Left ventricle myocardium superior (tissue), 1 donor: ENCODE measurements at regions of chr2 and their contacts with region 1.

Region 1: DNA sequence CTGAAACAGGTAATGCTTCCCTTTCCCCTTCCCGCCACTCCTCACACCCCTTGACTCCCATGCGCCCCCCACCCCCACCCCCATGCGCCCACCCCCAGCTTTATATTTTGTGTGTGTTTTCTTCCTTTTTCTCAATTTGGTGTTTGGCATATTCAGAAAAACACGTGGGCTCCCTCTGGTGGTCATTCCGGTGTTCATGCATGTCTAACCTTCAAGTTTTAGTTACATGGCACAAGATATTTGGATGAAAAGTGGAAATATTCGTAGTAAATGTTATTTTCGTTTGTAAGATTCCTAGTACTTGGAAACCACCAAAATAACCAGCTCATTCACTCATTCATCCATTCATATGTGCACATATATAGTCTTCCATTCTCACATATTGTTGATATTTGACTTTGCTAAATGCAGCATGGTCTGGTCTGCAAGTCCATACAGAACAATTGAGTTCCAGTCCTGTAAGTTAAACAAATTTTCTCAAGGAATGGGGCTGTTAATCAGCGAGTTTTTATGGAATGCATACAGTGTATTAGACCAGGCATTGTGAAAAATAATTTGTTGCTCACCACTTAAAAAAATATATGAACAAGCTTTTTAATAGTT is 143.6 kb upstream of the MAP3K20 start:
- DNase-seq: peak; percentile 65
- ATAC-seq: peak; percentile 17

Region 2: DNA sequence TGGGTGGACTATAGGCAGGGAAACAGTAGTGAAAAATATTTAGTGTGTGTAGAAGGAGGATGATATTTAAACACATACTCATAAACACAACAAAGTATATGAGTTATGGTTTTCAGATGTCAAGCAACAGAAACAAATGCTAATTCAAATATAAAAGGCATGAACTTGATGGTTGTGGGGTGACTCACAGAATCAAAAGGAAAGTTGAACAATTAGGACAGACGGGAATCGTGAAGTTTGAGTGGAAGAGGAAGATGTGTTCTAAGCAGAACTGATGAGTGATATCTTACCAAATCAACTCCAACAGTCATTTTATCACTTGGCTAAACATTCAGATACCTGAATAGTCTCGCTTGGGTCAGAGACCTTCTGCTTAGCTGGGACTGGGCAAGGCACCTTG is 558.3 kb before region 1 on chr2:
- intact Hi-C with region 1: no loop called
- DNase-seq: no peak
- ATAC-seq: no peak

Region 3: DNA sequence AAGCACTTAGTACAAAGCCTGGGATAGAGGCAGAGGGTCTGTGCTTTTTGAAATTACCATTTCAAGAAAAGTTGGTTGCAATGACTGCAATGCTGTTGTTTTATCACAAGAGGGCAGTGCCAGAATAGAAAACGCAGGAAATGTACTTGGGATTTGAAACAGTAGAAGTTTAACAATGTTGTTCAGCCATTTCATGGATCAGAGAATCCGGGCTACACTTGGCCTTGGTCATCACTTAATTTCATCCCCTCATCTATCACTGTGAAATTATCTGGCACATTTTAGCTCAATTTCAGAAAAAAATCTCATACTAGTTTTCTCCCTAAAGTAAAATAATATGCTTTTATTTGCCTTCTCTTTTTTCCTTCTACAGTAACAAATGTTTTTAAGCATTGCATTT is 125.5 kb before region 1 on chr2:
- intact Hi-C with region 1: loop called (anchors 5 kb)
- DNase-seq: no peak
- ATAC-seq: peak; percentile 35

Region 4: GRCh38 chr2:172861656-172862476 is 70.2 kb before region 1 on chr2:
- intact Hi-C with region 1: loop called (anchors 2 kb)
- DNase-seq: no peak
- ATAC-seq: peak; percentile 56

Region 5: DNA sequence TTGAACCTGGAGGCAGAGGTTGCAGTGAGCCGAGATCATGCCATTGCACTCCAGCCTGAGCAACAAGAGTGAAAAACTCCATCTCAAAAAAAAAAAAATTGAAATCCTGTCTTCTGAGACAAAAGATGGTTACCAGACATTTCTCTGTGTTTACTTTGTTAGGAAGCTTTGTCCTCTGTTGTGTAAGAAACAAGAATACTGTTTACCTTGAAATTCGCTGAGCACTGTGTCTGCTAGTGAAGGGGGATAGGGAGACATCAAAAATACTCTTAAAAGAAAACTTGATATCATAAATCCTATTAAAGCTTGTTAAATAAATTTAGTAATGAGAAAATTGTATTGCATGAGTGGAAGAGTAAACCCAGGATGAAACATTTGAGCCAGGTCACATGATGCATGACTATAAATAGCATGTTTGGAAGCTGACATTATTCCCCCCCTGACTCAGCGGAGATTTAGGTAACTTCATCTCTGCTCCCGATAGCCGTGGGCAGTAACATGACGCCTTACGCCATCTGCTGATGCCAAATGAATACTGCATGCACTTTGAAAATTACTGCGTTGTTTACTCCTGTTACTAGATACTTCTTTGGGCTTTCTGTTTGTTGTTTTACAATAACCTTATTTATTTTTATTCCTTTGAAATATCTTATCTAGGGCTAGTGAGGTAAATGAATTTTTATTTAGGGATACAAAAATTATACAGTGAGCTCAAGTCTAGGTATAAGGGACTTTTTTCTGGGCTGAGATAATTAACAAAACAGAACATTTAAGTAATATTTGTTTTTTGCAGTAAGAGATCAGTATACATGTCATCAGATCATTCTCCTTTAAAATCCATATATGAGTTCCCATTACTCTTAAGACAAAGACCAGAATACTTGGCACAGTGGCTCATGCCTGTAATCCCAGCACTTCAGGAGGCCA is 278.5 kb after region 1 on chr2:
- intact Hi-C with region 1: no loop called
- DNase-seq: peak; percentile 41
- ATAC-seq: peak; percentile 87